ENCODE measurements at regions of chr14 and their contacts with region 1.

Region 1: DNA sequence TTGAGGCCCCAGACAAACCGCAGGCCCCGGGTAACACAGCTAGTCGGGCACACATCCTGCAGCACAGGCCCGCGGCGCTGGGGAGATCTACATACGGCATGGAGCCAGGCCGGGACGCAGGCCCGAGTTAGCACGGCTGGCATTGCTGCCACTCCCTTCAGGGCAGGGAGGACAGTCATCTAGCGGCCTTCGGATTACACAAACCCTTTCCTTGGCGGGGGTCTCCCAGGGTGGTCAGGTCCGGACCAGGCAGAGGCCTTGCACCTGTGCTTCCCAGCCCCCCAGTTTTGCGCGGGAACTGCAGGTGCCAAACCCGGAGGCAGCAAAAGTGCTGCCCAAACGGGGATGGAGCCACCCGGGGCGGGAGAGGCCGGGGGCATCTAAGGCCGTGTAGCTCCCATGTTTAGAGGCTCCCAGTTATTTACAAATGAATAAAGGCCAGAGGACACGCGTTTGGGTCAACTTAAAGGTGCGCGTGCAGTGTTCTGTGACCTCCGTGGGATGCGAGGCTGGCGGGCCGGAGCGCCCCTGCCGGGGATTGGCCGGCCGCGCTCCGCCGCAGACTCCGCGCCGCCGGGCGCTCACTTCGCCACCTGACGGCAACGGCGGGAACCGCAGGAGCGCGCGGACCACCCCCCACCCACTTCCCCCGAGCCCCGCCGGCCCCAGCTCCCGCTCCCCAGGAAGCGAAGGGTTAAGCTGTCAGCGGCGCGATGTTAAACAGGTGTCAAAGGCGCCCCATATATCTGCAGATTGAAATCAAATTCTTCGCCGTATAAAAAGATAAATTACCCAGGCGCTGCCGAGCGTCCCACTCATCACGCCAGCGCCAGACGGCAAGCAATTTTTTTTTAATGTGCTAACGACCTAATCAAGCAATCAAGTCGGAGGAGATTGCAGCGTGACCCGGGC is 18.1 kb downstream of the VSX2 start:
- DNase-seq: peak; percentile 80
- ATAC-seq: peak; percentile 86

Region 2: GRCh38 chr14:74109369-74109768 is 148.0 kb before region 1 on chr14:
- intact Hi-C with region 1: loop called (anchors 2 kb)
- DNase-seq: no peak
- ATAC-seq: no peak

Region 3: DNA sequence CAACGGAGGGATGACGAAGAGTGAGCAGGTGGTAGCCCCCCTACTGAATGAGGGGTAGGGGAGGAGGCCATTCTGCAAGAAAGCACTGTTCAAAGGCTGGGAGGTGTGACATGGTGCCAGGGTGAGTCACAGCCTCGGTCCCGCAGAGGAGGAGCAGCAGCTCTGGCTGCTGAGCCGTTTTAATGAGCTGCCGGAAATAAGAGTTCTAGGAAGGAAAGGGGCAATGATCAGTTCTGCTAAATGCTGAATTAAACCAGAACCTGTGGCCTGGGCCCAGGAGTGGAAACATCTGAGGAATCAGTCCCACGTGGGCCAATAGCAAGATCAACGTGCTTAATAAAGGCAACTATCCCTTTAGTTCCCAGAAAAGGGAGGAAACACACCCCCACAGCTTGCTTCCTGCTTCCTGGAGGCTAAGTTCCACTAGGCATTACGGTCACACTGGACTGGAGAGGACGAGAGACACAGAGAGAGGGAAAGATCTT is 41.8 kb after region 1 on chr14:
- intact Hi-C with region 1: loop called (anchors 5 kb)
- DNase-seq: no peak
- ATAC-seq: no peak

Measured in Right ventricle myocardium inferior (tissue), 1 donor.